ENCODE measurements at regions of chr3 and their contacts with region 1.

Region 1: GRCh38 chr3:37190667-37191066 is 16.3 kb upstream of the LRRFIP2 start:
- DNase-seq: no peak
- H3K4me3 ChIP-seq: no peak overlapping the region
- H3K27ac ChIP-seq: no peak overlapping the region
- H3K27me3 ChIP-seq: no peaks in the 10 kb centered on the region
- CTCF ChIP-seq: no peak

Region 2: DNA sequence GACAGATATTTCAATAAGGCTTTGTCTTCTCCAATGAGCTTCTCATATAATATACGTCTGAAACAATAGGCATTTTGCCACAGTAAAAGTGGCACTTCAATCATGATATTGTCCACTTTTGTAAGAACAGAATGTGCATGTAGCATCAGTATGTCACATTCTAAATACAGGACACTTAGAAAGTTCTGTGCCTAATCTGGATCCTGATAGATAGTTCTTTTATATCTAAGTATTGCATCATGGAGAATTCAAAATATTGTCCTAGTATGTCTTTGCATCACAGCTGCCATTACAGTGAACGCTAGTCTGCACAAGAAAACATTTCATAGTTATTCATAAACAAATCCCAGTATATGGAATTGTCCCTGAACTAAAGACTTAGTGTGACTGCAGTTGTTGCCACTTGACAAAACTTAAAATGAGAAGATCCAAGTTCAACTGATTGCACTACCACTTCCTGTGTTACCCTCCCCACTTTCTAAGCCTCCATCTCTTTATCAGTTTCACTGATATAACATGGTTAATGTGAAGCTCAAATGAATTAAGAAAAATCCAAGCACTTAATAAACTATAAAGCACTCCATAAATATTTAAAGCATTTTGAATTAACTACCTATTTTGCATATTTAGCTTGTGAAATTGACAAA is 35.9 kb before region 1 on chr3:
- CTCF ChIA-PET with region 1: no interaction called
- POLR2A ChIA-PET with region 1: no interaction called
- DNase-seq: no peak
- H3K4me3 ChIP-seq: no peak overlapping the region
- H3K27ac ChIP-seq: no peak overlapping the region
- H3K27me3 ChIP-seq: no peaks in the 10 kb centered on the region
- CTCF ChIP-seq: no peak

Region 3: GRCh38 chr3:37221407-37221806 is 30.7 kb after region 1 on chr3:
- CTCF ChIA-PET with region 1: no interaction called
- POLR2A ChIA-PET with region 1: interaction called, 10 read pairs
- DNase-seq: no peak
- H3K4me3 ChIP-seq: no peak overlapping the region
- H3K27ac ChIP-seq: no peak overlapping the region
- H3K27me3 ChIP-seq: peaks cover 7% of the 10 kb centered on the region
- CTCF ChIP-seq: no peak

Region 4: DNA sequence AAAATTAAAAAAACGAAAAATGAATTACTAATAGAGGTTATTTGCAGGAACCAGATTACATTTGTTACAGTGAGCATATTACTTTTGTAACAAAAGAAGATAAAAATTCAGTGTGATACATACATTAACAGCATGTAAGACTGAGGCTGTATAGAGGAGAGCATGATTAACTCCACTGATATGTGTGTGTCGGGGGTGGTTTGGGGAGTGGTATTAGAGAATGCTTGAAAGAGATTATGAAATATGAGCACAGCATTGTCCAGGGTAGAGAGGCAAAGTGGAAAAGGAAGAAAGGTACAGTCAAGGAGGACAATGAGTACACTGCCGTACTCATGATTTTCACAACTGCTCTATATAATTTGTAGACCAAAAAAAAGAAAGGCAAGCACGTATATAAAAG is 46.6 kb after region 1 on chr3:
- CTCF ChIA-PET with region 1: no interaction called
- POLR2A ChIA-PET with region 1: no interaction called
- DNase-seq: no peak
- H3K4me3 ChIP-seq: no peak overlapping the region
- H3K27ac ChIP-seq: no peak overlapping the region
- H3K27me3 ChIP-seq: no peaks in the 10 kb centered on the region
- CTCF ChIP-seq: no peak

Measured in AG04450 (cell line).